ENCODE measurements at regions of chr6 and their contacts with region 1.

Region 1: GRCh38 chr6:150949526-150949925 is 84.0 kb downstream of the MTHFD1L start:
- DNase-seq: peak; percentile 20 to 32
- H3K4me3 ChIP-seq: no peak overlapping the region
- H3K27ac ChIP-seq: no peak overlapping the region
- H3K4me1 ChIP-seq: no peaks in the 10 kb centered on the region
- H3K27me3 ChIP-seq: no peaks in the 10 kb centered on the region
- CTCF ChIP-seq: no peak
- POLR2A ChIP-seq: no peak

Region 2: GRCh38 chr6:150910556-150910955 is 39.0 kb before region 1 on chr6:
- intact Hi-C with region 1: loop called (anchors 5 kb)
- DNase-seq: no peak
- H3K4me3 ChIP-seq: no peak overlapping the region
- H3K27ac ChIP-seq: no peak overlapping the region
- H3K4me1 ChIP-seq: peaks cover 4 to 8% of the 10 kb centered on the region in 2 donors
- H3K27me3 ChIP-seq: no peaks in the 10 kb centered on the region
- CTCF ChIP-seq: no peak
- POLR2A ChIP-seq: no peak

Region 3: GRCh38 chr6:151390276-151391032 is 440.9 kb after region 1 on chr6:
- intact Hi-C with region 1: no loop called
- DNase-seq: peak; percentile 98 to 99
- H3K4me3 ChIP-seq: peak overlapping the region; percentile 40 to 84 (median 79)
- H3K27ac ChIP-seq: peak overlapping the region; percentile 99
- H3K4me1 ChIP-seq: peaks cover 33 to 37% of the 10 kb centered on the region in 2 donors
- H3K27me3 ChIP-seq: no peaks in the 10 kb centered on the region
- CTCF ChIP-seq: no peak
- POLR2A ChIP-seq: peak; percentile 65 to 72